ENCODE measurements at regions of chr21 and their contacts with region 1.

Region 1: GRCh38 chr21:17780539-17780938 is 38.6 kb downstream of the C21orf91 start:
- DNase-seq: peak; percentile 61 to 91 (median 66)
- H3K4me3 ChIP-seq: peak overlapping the region in 1 of 2 donors; percentile 2
- H3K4me3 Mint-ChIP-seq: peak overlapping the region in 7 of 8 donors; percentile 40 to 90 (median 66)
- H3K27ac ChIP-seq: peak overlapping the region; percentile 67
- H3K27ac Mint-ChIP-seq: peak overlapping the region; percentile 87 to 97 (median 97)
- H3K4me1 ChIP-seq: peaks cover 82% of the 10 kb centered on the region
- H3K4me1 Mint-ChIP-seq: peaks cover 72 to 89% (median 81%) of the 10 kb centered on the region in 4 donors
- H3K27me3 ChIP-seq: no peaks in the 10 kb centered on the region
- H3K27me3 Mint-ChIP-seq: no peaks in the 10 kb centered on the region

Region 2: DNA sequence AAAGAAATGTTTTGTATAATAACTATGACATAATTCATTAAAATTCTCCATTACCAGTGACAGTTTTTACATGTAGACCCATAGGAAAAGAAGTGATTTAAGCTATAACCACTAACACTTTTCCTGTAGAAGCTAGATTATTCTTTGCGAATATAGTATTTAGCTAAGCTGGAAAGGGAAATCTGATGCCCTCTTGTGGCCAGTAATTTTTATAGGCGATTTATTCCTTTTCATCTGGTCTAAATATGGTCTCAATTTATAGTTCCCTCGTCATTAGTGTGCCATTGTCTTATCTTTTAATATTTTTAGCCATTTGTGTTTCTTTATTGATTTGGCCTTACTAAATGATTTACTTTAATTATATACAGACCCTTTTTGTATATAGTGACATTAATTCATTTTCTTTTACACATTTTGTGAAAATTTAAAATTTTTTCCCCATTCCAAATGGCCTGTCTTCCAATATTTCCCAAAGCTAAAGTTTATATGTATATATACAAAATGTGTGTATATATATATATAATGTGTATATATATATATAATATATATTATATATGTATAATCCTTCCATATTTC is 194.6 kb before region 1 on chr21:
- CTCF ChIA-PET with region 1: no interaction called
- POLR2A ChIA-PET with region 1: no interaction called
- intact Hi-C with region 1: no loop called
- DNase-seq: peak in 4 of 5 donors; percentile 34 to 45 (median 40)
- H3K4me3 ChIP-seq: no peak overlapping the region
- H3K4me3 Mint-ChIP-seq: no peak overlapping the region
- H3K27ac ChIP-seq: no peak overlapping the region
- H3K27ac Mint-ChIP-seq: no peak overlapping the region
- H3K4me1 ChIP-seq: no peaks in the 10 kb centered on the region
- H3K4me1 Mint-ChIP-seq: no peaks in the 10 kb centered on the region
- H3K27me3 ChIP-seq: no peaks in the 10 kb centered on the region
- H3K27me3 Mint-ChIP-seq: no peaks in the 10 kb centered on the region

Region 3: GRCh38 chr21:17679002-17679600 is 101.4 kb before region 1 on chr21:
- CTCF ChIA-PET with region 1: interaction called, 16 read pairs
- POLR2A ChIA-PET with region 1: no interaction called
- intact Hi-C with region 1: no loop called
- DNase-seq: peak; percentile 40 to 70 (median 66)
- H3K4me3 ChIP-seq: no peak overlapping the region
- H3K4me3 Mint-ChIP-seq: no peak overlapping the region
- H3K27ac ChIP-seq: no peak overlapping the region
- H3K27ac Mint-ChIP-seq: no peak overlapping the region
- H3K4me1 ChIP-seq: no peaks in the 10 kb centered on the region
- H3K4me1 Mint-ChIP-seq: no peaks in the 10 kb centered on the region
- H3K27me3 ChIP-seq: no peaks in the 10 kb centered on the region
- H3K27me3 Mint-ChIP-seq: no peaks in the 10 kb centered on the region

Region 4: GRCh38 chr21:17741806-17742550 is 38.6 kb before region 1 on chr21:
- CTCF ChIA-PET with region 1: no interaction called
- POLR2A ChIA-PET with region 1: interaction called, 4 read pairs
- intact Hi-C with region 1: loop called (anchors 5 kb)
- DNase-seq: no peak
- H3K4me3 ChIP-seq: no peak overlapping the region
- H3K4me3 Mint-ChIP-seq: no peak overlapping the region
- H3K27ac ChIP-seq: no peak overlapping the region
- H3K27ac Mint-ChIP-seq: no peak overlapping the region
- H3K4me1 ChIP-seq: no peaks in the 10 kb centered on the region
- H3K4me1 Mint-ChIP-seq: peaks cover 0 to 11% (median 4%) of the 10 kb centered on the region in 4 donors
- H3K27me3 ChIP-seq: no peaks in the 10 kb centered on the region
- H3K27me3 Mint-ChIP-seq: no peaks in the 10 kb centered on the region

Region 5: GRCh38 chr21:17753726-17754125 is 26.8 kb before region 1 on chr21:
- CTCF ChIA-PET with region 1: no interaction called
- POLR2A ChIA-PET with region 1: no interaction called
- intact Hi-C with region 1: no loop called
- DNase-seq: no peak
- H3K4me3 ChIP-seq: no peak overlapping the region
- H3K4me3 Mint-ChIP-seq: no peak overlapping the region
- H3K27ac ChIP-seq: no peak overlapping the region
- H3K27ac Mint-ChIP-seq: no peak overlapping the region
- H3K4me1 ChIP-seq: no peaks in the 10 kb centered on the region
- H3K4me1 Mint-ChIP-seq: no peaks in the 10 kb centered on the region
- H3K27me3 ChIP-seq: no peaks in the 10 kb centered on the region
- H3K27me3 Mint-ChIP-seq: no peaks in the 10 kb centered on the region

Region 6: GRCh38 chr21:17802572-17802971 is 22.0 kb after region 1 on chr21:
- CTCF ChIA-PET with region 1: interaction called, 5 read pairs
- POLR2A ChIA-PET with region 1: interaction called, 46 read pairs
- intact Hi-C with region 1: no loop called
- DNase-seq: no peak
- H3K4me3 ChIP-seq: no peak overlapping the region
- H3K4me3 Mint-ChIP-seq: peak overlapping the region in 2 of 8 donors; percentile 4 to 25
- H3K27ac ChIP-seq: no peak overlapping the region
- H3K27ac Mint-ChIP-seq: peak overlapping the region; percentile 26 to 84 (median 75)
- H3K4me1 ChIP-seq: peaks cover 68% of the 10 kb centered on the region
- H3K4me1 Mint-ChIP-seq: peaks cover 40 to 65% (median 53%) of the 10 kb centered on the region in 4 donors
- H3K27me3 ChIP-seq: no peaks in the 10 kb centered on the region
- H3K27me3 Mint-ChIP-seq: no peaks in the 10 kb centered on the region

Region 7: DNA sequence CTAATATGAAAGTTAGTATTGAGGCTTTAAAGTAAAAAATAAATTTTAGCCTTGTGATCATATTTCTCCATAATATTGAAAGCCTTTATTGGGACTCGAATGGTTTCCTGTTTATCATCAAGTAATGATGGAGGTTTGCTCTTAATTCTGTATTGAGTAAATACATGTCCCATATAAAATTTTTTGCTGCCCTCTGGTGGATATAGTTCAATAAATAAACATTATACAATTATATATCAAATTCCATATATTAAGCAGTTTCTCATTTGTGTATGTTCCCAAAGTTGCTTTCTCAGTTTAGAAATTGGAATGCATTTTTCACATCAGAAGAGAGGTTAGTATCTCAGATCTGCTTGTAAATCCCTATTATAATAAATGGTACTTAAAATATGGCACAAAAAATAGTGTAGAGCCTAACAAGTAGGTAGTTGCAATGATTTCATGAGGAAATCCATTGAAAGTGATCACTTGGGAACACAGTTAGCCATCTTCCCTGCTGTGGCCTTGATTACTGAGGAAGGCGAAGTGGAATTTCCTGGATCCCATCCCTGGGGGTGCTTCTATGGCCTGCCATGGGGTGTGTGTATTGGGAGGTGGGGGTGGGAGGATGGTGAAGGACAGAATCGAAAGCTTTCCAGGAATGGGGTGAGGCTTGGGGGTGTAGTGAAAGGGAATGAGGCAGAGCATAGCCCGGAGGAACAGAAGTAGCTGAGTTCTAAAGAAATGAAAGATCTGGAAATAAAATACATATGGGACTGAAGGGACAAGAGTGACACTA is 122.7 kb after region 1 on chr21:
- CTCF ChIA-PET with region 1: interaction called, 5 read pairs
- POLR2A ChIA-PET with region 1: no interaction called
- intact Hi-C with region 1: loop called (anchors 2 kb)
- DNase-seq: peak in 4 of 5 donors; percentile 52 to 57 (median 56)
- H3K4me3 ChIP-seq: no peak overlapping the region
- H3K4me3 Mint-ChIP-seq: no peak overlapping the region
- H3K27ac ChIP-seq: no peak overlapping the region
- H3K27ac Mint-ChIP-seq: no peak overlapping the region
- H3K4me1 ChIP-seq: peaks cover 5% of the 10 kb centered on the region
- H3K4me1 Mint-ChIP-seq: peaks cover 5 to 7% (median 6%) of the 10 kb centered on the region in 4 donors
- H3K27me3 ChIP-seq: no peaks in the 10 kb centered on the region
- H3K27me3 Mint-ChIP-seq: no peaks in the 10 kb centered on the region

Region 8: GRCh38 chr21:17915976-17916375 is 135.4 kb after region 1 on chr21:
- CTCF ChIA-PET with region 1: no interaction called
- POLR2A ChIA-PET with region 1: no interaction called
- intact Hi-C with region 1: no loop called
- DNase-seq: no peak
- H3K4me3 ChIP-seq: no peak overlapping the region
- H3K4me3 Mint-ChIP-seq: no peak overlapping the region
- H3K27ac ChIP-seq: no peak overlapping the region
- H3K27ac Mint-ChIP-seq: no peak overlapping the region
- H3K4me1 ChIP-seq: no peaks in the 10 kb centered on the region
- H3K4me1 Mint-ChIP-seq: no peaks in the 10 kb centered on the region
- H3K27me3 ChIP-seq: no peaks in the 10 kb centered on the region
- H3K27me3 Mint-ChIP-seq: peaks cover 2 to 4% of the 10 kb centered on the region in 2 donors